ENCODE measurements at regions of chr20 and their contacts with region 1.

Region 1: DNA sequence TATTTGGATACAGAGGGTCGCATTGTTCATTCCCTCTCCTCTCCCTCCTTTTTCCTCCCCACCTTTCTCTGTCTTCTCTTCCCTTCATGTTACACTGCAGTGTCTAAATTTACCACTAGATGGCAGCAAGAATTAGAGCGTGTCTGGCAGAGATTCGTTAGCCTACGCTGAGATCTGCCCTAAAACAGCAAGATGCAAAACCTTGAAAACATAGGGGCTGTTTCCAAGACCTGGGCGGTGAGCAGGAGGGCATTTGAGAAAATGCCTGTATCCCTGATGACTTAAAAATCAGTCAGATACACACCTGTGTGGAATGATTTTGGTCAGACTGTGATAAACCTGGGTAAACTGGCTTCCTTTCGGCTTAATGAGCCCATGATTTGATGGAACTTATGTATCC is 101.5 kb upstream of the ISM1 start:
- H3K4me3 Mint-ChIP-seq: no peak overlapping the region
- H3K27ac Mint-ChIP-seq: no peak overlapping the region
- H3K4me1 Mint-ChIP-seq: no peaks in the 10 kb centered on the region
- H3K27me3 Mint-ChIP-seq: no peaks in the 10 kb centered on the region

Region 2: GRCh38 chr20:13261460-13262301 is 142.1 kb after region 1 on chr20:
- intact Hi-C with region 1: loop called (anchors 1 kb)
- H3K4me3 Mint-ChIP-seq: no peak overlapping the region
- H3K27ac Mint-ChIP-seq: no peak overlapping the region
- H3K4me1 Mint-ChIP-seq: no peaks in the 10 kb centered on the region
- H3K27me3 Mint-ChIP-seq: no peaks in the 10 kb centered on the region

Region 3: GRCh38 chr20:13546497-13547131 is 427.0 kb after region 1 on chr20:
- intact Hi-C with region 1: loop called (anchors 2 kb)
- H3K4me3 Mint-ChIP-seq: no peak overlapping the region
- H3K27ac Mint-ChIP-seq: no peak overlapping the region
- H3K4me1 Mint-ChIP-seq: no peaks in the 10 kb centered on the region
- H3K27me3 Mint-ChIP-seq: no peaks in the 10 kb centered on the region

Region 4: GRCh38 chr20:13771853-13772453 is 652.4 kb after region 1 on chr20:
- intact Hi-C with region 1: loop called (anchors 5 kb)
- H3K4me3 Mint-ChIP-seq: no peak overlapping the region
- H3K27ac Mint-ChIP-seq: no peak overlapping the region
- H3K4me1 Mint-ChIP-seq: peaks cover 4% of the 10 kb centered on the region
- H3K27me3 Mint-ChIP-seq: no peaks in the 10 kb centered on the region

Region 5: DNA sequence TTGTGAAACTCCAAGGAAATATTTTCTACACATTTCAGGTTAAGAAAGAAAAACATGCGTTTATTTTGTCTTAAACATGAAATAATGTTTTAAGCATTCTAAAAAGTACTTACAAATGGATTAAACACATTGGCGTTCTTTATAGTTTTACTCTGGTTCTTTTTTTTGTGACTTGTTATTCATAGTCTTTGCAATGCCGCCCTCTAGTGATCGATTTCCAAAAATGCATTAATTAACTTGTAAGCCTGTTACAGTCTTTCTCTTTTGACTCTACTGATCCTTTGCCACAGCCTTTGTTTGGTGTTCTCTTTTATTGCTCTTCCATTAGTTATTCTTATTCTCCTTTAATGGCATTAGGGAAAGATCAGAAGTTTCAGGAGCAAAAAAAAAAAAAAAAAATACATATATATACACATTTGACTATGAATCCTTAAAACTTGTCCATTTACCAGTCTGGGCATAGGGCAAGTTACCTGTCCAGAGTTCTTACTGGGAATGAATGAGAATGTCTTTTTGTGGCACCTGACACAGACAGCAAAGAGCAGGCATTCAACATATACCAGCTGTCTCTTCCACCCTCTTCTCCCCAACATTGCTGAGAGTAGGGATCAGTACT is 935.7 kb after region 1 on chr20:
- intact Hi-C with region 1: loop called (anchors 5 kb)
- H3K4me3 Mint-ChIP-seq: no peak overlapping the region
- H3K27ac Mint-ChIP-seq: no peak overlapping the region
- H3K4me1 Mint-ChIP-seq: no peaks in the 10 kb centered on the region
- H3K27me3 Mint-ChIP-seq: peaks cover 3% of the 10 kb centered on the region